ENCODE measurements at regions of chr3 and their contacts with region 1.

Region 1: DNA sequence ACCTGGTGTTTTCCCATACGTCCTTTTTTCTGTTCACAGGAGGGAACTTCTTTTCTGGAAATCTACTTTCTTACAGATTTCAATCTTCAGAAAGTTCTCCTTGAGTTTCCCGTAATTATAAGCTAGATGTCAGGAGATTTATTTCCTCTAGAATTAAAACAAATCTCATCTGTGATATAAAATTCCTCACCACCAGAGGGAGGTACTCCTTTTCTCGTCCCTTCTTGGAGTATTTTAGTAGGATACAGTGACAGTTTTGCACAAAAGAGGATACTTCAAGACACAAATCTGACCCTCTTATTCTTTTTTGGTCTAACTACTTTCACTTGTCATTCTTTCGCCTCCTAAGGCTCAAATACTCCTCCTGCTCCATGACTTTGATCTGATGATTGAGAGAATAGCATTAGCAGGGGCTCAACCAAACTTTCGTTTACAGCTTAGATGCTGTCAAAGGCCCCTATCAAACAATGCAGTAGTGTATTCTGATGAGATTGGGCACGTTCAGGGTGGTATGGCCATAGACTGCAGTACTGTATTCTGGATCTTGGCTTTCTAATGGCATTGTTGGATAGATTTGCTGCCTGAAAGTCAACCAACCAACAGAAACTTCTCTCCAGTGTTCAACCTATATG is 38.0 kb downstream of the TMEM41A start:
- DNase-seq: no peak
- H3K4me3 ChIP-seq: no peak overlapping the region
- CTCF ChIP-seq: peak; percentile 22

Region 2: DNA sequence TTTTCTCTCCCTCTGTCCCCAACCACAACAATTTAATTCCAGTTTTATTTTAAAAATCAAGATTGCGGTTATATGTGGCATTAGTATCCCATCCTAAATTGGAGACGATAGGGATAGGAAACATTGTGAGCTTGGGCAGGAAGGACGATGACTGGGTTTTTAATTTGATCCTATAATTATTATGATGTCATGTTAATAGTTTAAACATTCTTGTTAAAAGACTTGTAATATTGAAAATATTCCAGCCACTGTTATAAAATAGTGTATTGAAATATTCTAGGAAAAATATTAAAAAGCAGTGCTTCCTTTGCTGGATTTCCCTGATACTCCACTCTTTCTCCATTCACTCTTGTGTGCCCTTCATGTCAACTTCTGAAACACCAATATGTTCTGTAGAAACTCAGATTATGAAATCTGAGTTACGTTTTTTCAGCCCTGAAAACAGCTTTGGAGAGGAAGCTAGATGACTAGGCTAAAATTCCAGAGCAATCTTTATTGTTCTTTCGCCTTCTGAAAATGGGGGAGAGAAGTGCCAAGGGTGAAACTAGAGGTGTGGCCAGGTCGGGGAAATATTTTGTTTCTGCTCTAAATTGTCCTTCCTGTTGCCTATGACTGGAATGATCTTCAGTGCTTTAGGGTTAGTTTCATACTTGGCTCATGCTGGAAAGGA is 144.0 kb before region 1 on chr3:
- CTCF ChIA-PET with region 1: no interaction called
- POLR2A ChIA-PET with region 1: no interaction called
- DNase-seq: no peak
- H3K4me3 ChIP-seq: no peak overlapping the region
- CTCF ChIP-seq: no peak

Region 3: DNA sequence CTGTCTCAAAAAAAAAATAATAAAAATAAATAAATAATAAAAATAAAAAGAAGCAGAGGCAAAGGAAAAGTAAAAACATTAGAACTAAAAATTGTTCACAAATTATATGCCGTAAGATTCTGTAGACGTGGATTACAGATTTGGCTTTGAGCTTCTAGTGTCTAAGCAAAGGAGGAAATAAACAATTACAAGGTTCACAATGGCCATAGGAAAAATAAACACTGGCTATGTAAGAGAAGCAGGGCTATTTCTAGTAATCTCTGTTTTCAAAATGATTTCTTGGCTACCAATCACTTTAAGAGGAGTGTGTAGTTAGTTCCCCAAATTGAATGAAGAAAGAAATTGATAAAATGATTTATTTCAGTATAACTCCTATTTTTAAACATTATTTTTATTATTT is 16.5 kb before region 1 on chr3:
- CTCF ChIA-PET with region 1: interaction called, 14 read pairs
- POLR2A ChIA-PET with region 1: no interaction called
- DNase-seq: no peak
- H3K4me3 ChIP-seq: no peak overlapping the region
- CTCF ChIP-seq: no peak

Region 4: GRCh38 chr3:185473290-185473815 is 12.5 kb after region 1 on chr3:
- CTCF ChIA-PET with region 1: interaction called, 20 read pairs
- POLR2A ChIA-PET with region 1: no interaction called
- DNase-seq: no peak
- H3K4me3 ChIP-seq: no peak overlapping the region
- CTCF ChIP-seq: no peak

Region 5: DNA sequence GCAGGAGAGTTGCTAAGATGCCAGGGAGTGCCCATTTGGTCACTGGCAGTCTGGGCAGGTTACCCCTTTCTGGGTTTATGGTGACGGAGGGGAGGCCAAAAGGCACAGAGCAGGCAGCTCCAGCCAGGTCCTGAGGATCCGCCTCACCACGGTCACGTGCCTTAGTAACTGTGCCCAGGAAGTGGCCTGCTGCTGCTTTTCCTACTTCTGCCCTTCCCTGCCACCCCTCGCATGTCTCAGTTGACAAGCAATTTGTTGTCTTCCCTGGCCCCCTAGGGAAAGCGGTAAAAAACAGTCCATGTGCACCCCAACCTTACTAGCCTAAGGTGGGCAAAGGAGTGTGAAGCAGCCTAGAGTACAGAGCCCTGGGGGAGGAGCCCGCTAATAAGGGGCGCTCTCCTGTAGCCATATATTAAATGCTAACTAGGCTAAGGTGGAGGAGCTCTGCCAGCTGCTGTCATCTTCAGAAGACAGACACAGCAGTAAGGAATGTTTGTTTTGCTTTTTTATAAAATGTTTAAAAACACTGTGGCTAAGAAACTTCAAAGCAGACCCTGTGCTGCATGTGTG is 100.6 kb after region 1 on chr3:
- CTCF ChIA-PET with region 1: interaction called, 54 read pairs
- POLR2A ChIA-PET with region 1: no interaction called
- DNase-seq: no peak
- H3K4me3 ChIP-seq: no peak overlapping the region
- CTCF ChIP-seq: no peak

Region 6: GRCh38 chr3:185729335-185730055 is 268.7 kb after region 1 on chr3:
- CTCF ChIA-PET with region 1: no interaction called
- POLR2A ChIA-PET with region 1: no interaction called
- DNase-seq: no peak
- H3K4me3 ChIP-seq: no peak overlapping the region
- CTCF ChIP-seq: no peak

Measured in AG04449 (cell line).